ENCODE measurements at regions of chr4 and their contacts with region 1.

Region 1: DNA sequence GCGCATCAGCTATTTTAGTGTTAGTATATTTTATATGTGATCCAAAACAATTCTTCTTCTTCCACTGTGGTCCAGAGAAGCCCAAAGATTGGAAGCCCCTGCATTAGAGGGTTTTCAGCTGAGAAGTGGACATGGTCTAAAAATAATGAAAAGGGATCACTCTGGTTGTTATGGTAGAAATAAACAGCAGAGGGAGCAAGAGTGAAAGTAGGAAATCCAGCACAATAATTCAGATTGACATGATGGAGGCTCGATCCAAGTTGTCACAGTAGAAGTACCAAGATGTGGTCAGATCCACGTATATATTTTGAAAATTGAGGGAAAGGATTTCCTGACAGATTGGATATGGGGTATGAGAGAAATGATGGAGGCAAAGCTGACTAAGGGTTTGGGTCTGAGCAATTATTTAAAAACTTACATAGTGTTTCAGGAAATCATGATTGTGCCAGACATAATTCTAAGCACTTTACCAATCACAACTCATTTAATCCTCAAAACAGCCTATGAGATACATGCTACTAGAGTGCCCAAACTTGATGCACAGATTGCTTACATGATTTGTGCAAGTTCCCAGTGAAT is 17.0 kb upstream of the TMEM144 start:
- DNase-seq: no peak
- H3K4me3 ChIP-seq: no peak overlapping the region
- H3K27ac ChIP-seq: no peak overlapping the region
- H3K4me1 ChIP-seq: no peaks in the 10 kb centered on the region
- H3K27me3 ChIP-seq: no peaks in the 10 kb centered on the region
- CTCF ChIP-seq: peak in 2 of 3 experiments; percentile 43 to 62; a peak in 2 of 4 replicates
- EP300 ChIP-seq: no peak
- POLR2A ChIP-seq: no peak
- RAD21 ChIP-seq: peak; percentile 49 to 51

Region 2: DNA sequence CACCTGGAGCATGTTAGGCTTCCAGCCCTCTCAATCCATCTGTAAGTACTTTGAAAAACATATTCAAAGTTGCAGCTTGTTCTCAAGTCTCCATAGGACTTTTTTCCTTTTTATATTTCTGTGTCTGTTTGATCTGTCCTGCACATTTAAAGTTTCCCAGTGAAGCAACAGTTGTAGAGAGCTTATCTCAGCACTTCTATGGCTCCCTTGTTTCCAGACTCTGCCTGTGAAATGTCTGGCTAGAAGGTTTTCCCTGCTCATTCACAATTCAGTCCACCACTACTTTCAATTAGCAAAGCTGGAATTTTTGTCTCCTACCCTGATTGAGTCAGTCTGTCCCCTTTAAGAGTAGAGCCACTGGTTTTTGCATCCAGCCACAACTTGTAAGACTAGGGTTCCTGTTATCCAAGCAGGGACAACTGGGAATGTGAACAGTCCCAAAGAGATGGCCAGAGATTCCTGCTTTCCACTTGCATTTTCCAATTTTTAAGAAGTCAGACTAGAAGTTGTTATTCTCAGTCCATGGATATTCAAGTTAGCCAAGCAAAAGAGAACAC is 136.5 kb before region 1 on chr4:
- CTCF ChIA-PET with region 1: no interaction called
- POLR2A ChIA-PET with region 1: no interaction called
- DNase-seq: no peak
- H3K4me3 ChIP-seq: no peak overlapping the region
- H3K27ac ChIP-seq: no peak overlapping the region
- H3K4me1 ChIP-seq: no peaks in the 10 kb centered on the region
- H3K27me3 ChIP-seq: no peaks in the 10 kb centered on the region
- CTCF ChIP-seq: no peak
- EP300 ChIP-seq: no peak
- POLR2A ChIP-seq: no peak
- RAD21 ChIP-seq: no peak

Region 3: GRCh38 chr4:158182736-158183135 is 10.5 kb before region 1 on chr4:
- CTCF ChIA-PET with region 1: interaction called, 26 read pairs
- POLR2A ChIA-PET with region 1: no interaction called
- DNase-seq: no peak
- H3K4me3 ChIP-seq: no peak overlapping the region
- H3K27ac ChIP-seq: no peak overlapping the region
- H3K4me1 ChIP-seq: no peaks in the 10 kb centered on the region
- H3K27me3 ChIP-seq: no peaks in the 10 kb centered on the region
- CTCF ChIP-seq: no peak
- EP300 ChIP-seq: no peak
- POLR2A ChIP-seq: no peak
- RAD21 ChIP-seq: no peak

Region 4: GRCh38 chr4:158234671-158235070 is 41.4 kb after region 1 on chr4:
- CTCF ChIA-PET with region 1: interaction called, 12 read pairs
- POLR2A ChIA-PET with region 1: no interaction called
- DNase-seq: no peak
- H3K4me3 ChIP-seq: no peak overlapping the region
- H3K27ac ChIP-seq: no peak overlapping the region
- H3K4me1 ChIP-seq: no peaks in the 10 kb centered on the region
- H3K27me3 ChIP-seq: no peaks in the 10 kb centered on the region
- CTCF ChIP-seq: no peak
- EP300 ChIP-seq: no peak
- POLR2A ChIP-seq: no peak
- RAD21 ChIP-seq: no peak

Measured in H1 (cell line).